ENCODE measurements at regions of chr10 and their contacts with region 1.

Region 1: DNA sequence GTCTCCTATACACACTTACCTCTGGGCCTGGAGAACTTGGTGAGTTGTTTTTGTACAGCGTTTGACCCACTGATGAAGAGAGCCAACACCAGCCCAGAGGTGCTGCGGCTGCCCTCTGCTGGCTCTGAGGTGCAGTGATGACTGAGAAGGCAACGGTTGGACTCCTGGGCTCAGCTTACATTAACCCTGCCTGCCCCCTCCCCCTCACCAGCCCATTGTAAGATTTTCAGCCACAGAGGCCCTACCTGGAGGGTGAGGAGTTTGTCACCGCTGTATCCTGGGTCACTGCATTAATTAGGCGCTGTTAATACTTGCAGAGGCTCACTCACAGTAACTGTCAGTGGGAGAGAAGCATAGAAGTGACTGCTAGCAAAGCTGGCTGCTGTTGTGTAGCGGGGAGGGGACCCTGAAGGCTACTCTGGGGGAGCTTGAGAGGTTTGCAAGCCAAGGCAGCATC is 19.0 kb upstream of the ANKRD2 start:
- DNase-seq: peak; percentile 52
- H3K4me3 Mint-ChIP-seq: no peak overlapping the region
- H3K27ac Mint-ChIP-seq: no peak overlapping the region
- H3K4me1 Mint-ChIP-seq: no peaks in the 10 kb centered on the region
- H3K27me3 Mint-ChIP-seq: peaks cover 4% of the 10 kb centered on the region

Region 2: DNA sequence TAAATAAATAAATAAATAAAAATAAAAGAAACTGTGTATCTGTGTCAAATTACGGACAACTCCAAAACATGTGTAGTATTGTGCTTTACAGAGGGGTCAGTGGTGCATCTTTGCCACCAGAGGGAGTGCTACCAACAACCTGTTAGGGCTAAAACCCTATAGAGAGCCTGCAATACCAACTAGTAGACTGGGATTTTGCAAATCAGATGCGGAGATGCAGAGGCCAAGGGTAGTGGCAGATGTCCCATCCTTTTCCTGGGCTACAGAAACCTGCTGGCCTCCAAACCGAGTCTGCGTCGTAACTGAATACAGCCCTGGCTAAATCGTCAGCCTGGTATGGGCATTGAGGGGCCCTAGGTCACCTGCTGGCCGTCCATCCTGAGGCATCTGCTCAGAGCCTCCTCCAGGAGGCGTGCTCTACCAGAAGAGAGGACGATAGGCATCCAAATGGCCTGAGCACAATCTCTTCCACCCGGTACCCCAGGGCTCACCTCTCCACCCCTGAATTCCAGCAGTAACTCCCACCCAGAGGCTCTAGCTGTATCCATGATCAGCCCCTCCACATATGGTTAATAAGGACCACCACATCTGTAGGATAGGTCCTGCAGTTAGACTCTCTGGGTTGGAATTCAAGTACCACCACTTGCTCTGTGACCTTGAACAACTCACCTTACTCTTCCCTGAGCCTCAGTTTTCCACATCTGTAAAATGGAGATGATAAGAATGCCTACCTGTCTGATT is 146.2 kb before region 1 on chr10:
- intact Hi-C with region 1: loop called (anchors 1 kb)
- DNase-seq: peak; percentile 55
- H3K4me3 Mint-ChIP-seq: peak overlapping the region; percentile 57
- H3K27ac Mint-ChIP-seq: peak overlapping the region; percentile 46
- H3K4me1 Mint-ChIP-seq: peaks cover 11% of the 10 kb centered on the region
- H3K27me3 Mint-ChIP-seq: no peaks in the 10 kb centered on the region

Region 3: GRCh38 chr10:97452352-97452751 is 101.3 kb before region 1 on chr10:
- intact Hi-C with region 1: no loop called
- DNase-seq: no peak
- H3K4me3 Mint-ChIP-seq: no peak overlapping the region
- H3K27ac Mint-ChIP-seq: peak overlapping the region; percentile 58
- H3K4me1 Mint-ChIP-seq: peaks cover 39% of the 10 kb centered on the region
- H3K27me3 Mint-ChIP-seq: no peaks in the 10 kb centered on the region

Region 4: GRCh38 chr10:97463363-97464132 is 90.1 kb before region 1 on chr10:
- intact Hi-C with region 1: loop called (anchors 1 kb)
- DNase-seq: peak; percentile 18
- H3K4me3 Mint-ChIP-seq: no peak overlapping the region
- H3K27ac Mint-ChIP-seq: no peak overlapping the region
- H3K4me1 Mint-ChIP-seq: no peaks in the 10 kb centered on the region
- H3K27me3 Mint-ChIP-seq: no peaks in the 10 kb centered on the region

Region 5: DNA sequence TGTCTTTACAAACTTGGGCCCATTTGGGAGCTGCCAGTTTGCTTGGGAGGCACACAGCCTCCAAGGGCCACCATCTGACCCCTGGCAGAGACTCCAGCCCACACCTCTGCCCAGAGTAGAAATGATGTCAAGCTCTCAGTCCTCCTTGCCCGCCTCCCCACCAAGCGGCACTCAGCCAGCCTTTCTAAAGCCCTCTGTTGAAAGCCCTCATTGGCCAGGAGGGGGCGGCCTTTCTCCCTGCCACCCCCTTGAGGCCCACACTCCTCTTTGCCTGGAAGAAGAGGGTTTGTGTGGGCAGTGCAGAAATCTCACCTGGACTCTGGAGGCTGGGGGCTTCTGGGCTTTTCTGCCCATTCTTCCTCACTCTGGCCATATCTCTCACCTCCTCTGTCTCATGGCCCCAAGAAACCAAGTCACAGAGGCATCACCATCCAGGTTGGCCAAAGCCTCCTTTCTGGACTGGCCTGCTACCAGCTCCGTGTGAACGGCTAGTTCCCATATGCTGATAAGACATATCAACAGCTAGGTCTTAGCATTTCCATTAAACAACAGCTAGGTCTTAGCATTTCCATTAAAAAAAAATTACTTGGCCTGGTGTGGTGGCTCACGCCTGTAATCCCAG is 18.7 kb before region 1 on chr10:
- intact Hi-C with region 1: loop called (anchors 1 kb)
- DNase-seq: no peak
- H3K4me3 Mint-ChIP-seq: no peak overlapping the region
- H3K27ac Mint-ChIP-seq: no peak overlapping the region
- H3K4me1 Mint-ChIP-seq: no peaks in the 10 kb centered on the region
- H3K27me3 Mint-ChIP-seq: peaks cover 2% of the 10 kb centered on the region

Region 6: GRCh38 chr10:97584060-97584797 is 30.6 kb after region 1 on chr10 and contains the start of gene HOGA1:
- intact Hi-C with region 1: no loop called
- DNase-seq: no peak
- H3K4me3 Mint-ChIP-seq: no peak within 1 kb of the TSS
- H3K27ac Mint-ChIP-seq: no peak within 1 kb of the TSS
- H3K4me1 Mint-ChIP-seq: no peaks in the 10 kb centered on the region
- H3K27me3 Mint-ChIP-seq: no peaks in the 10 kb centered on the region
- total RNA-seq, gene HOGA1: not detected in 2 replicates